ENCODE measurements at regions of chr10 and their contacts with region 1.

Region 1: GRCh38 chr10:44513591-44513990 is 128.7 kb upstream of the CXCL12 start:
- DNase-seq: no peak
- H3K4me3 ChIP-seq: no peak overlapping the region
- H3K4me3 Mint-ChIP-seq: no peak overlapping the region
- H3K27ac Mint-ChIP-seq: no peak overlapping the region
- H3K4me1 ChIP-seq: no peaks in the 10 kb centered on the region
- H3K4me1 Mint-ChIP-seq: no peaks in the 10 kb centered on the region
- H3K27me3 ChIP-seq: no peaks in the 10 kb centered on the region
- H3K27me3 Mint-ChIP-seq: peaks cover 12% of the 10 kb centered on the region
- CTCF ChIP-seq: no peak

Region 2: DNA sequence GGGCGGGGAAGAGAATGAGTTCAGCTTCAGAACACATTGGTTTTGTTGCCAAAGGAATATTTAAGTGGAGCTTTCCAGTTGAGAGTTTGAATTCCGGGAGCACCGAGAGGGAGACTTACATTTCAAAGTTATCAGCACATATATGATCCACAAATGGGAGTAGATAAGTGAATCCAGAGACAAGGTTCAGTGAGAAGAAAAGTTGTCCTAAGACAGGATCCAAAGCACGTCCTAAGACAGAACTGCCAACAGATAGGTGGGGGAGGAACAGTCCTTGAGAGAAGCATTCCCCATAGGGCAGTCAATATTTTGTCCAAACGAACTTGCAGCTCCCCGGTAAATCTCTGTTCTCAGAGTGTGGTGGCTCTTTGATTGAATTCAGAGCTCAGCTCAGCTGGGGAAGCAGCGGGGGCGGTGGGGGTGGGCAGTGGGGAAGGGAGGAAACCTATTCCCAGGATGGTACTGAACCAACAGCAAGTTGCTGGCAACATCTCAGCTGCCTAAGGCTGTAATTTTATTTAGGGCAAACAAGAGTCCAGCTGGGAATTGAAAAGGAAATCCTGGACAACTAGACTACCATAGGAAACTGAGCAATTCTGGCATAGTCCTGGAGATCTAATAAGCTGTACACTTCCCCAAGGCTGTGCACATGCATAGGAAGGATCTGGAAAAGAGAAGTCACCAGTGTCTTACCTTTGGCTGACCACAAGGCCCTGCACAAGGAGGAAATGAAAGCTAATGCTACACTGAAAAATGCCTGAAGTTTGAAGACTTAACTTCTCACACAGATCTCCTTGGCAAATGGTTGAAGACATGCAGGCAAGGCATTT is 34.5 kb before region 1 on chr10:
- CTCF ChIA-PET with region 1: no interaction called
- POLR2A ChIA-PET with region 1: no interaction called
- intact Hi-C with region 1: loop called (anchors 5 kb)
- DNase-seq: no peak
- H3K4me3 ChIP-seq: no peak overlapping the region
- H3K4me3 Mint-ChIP-seq: no peak overlapping the region
- H3K27ac Mint-ChIP-seq: no peak overlapping the region
- H3K4me1 ChIP-seq: no peaks in the 10 kb centered on the region
- H3K4me1 Mint-ChIP-seq: no peaks in the 10 kb centered on the region
- H3K27me3 ChIP-seq: no peaks in the 10 kb centered on the region
- H3K27me3 Mint-ChIP-seq: peaks cover 12% of the 10 kb centered on the region
- CTCF ChIP-seq: no peak

Region 3: GRCh38 chr10:44567471-44567870 is 53.9 kb after region 1 on chr10:
- CTCF ChIA-PET with region 1: no interaction called
- POLR2A ChIA-PET with region 1: no interaction called
- intact Hi-C with region 1: no loop called
- DNase-seq: no peak
- H3K4me3 ChIP-seq: no peak overlapping the region
- H3K4me3 Mint-ChIP-seq: no peak overlapping the region
- H3K27ac Mint-ChIP-seq: no peak overlapping the region
- H3K4me1 ChIP-seq: no peaks in the 10 kb centered on the region
- H3K4me1 Mint-ChIP-seq: no peaks in the 10 kb centered on the region
- H3K27me3 ChIP-seq: no peaks in the 10 kb centered on the region
- H3K27me3 Mint-ChIP-seq: peaks cover 7% of the 10 kb centered on the region
- CTCF ChIP-seq: no peak